ENCODE measurements at regions of chr13 and their contacts with region 1.

Region 1: DNA sequence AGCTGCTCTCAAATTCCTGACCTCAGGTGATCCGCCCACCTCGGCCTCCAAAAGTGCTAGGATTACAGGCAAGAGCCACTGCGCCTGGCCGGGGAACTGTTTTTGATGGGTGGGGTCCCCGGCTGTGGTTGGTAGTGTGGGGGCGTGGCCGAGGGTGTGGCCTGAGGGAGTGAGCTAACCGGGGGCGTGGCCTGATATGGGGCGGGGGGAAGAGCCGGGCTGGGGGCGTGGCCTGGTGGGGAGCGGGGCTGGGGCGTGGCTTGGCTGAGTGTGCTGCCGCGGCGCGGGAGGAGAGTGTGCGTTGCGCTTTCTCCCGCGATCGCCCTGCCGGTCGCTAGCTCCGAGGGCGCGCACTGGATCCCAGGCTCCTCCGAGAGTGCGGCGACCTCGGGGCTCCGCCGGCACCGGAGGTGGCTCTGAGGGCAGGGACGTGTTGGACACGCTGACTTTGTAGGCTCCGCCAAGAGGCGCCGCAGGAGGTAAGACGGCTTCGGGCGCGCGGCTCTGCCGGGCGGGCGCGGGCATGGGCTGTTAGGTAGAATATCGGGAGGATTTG is at the start of gene SPATA13:
- DNase-seq: peak; percentile 81 to 92
- H3K4me3 ChIP-seq: peak within 1 kb of the TSS; percentile 75
- H3K27ac ChIP-seq: peak within 1 kb of the TSS; percentile 86
- H3K4me1 ChIP-seq: peaks cover 26% of the 10 kb centered on the region
- H3K27me3 ChIP-seq: no peaks in the 10 kb centered on the region
- CTCF ChIP-seq: no peak
- total RNA-seq, gene SPATA13: 28.7 and 33.0 TPM in 2 replicates

Region 2: DNA sequence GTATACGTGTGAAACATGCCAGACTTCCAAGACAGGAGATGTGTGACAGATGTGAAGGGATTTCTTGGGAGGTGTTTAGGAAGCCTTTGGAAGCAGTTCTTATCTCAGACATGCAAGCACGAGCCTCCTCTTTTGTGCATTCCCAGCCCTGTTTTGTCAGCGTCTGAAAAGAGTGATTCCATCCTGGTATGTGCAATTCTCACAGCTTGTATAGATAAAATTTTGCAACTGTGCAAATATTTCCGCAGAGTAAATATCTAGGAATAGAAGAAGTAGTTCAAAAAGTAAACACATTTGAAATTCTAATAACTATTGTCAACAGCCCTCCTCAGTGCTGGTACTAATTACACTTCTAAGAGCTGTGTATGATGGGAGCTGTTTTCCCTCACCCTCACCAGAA is 190.9 kb before region 1 on chr13:
- CTCF ChIA-PET with region 1: no interaction called
- POLR2A ChIA-PET with region 1: no interaction called
- intact Hi-C with region 1: no loop called
- DNase-seq: no peak
- H3K4me3 ChIP-seq: no peak overlapping the region
- H3K27ac ChIP-seq: no peak overlapping the region
- H3K4me1 ChIP-seq: no peaks in the 10 kb centered on the region
- H3K27me3 ChIP-seq: no peaks in the 10 kb centered on the region
- CTCF ChIP-seq: no peak

Region 3: GRCh38 chr13:24038841-24039330 is 121.6 kb before region 1 on chr13:
- CTCF ChIA-PET with region 1: no interaction called
- POLR2A ChIA-PET with region 1: no interaction called
- intact Hi-C with region 1: loop called (anchors 5 kb)
- DNase-seq: peak; percentile 59 to 76
- H3K4me3 ChIP-seq: peak overlapping the region; percentile 36; the same call in 1 of the 2 replicates
- H3K27ac ChIP-seq: peak overlapping the region; percentile 52
- H3K4me1 ChIP-seq: peaks cover 26% of the 10 kb centered on the region
- H3K27me3 ChIP-seq: no peaks in the 10 kb centered on the region
- CTCF ChIP-seq: no peak

Region 4: GRCh38 chr13:24053519-24054251 is 106.8 kb before region 1 on chr13:
- CTCF ChIA-PET with region 1: no interaction called
- POLR2A ChIA-PET with region 1: no interaction called
- intact Hi-C with region 1: loop called (anchors 1 kb)
- DNase-seq: peak; percentile 55 to 78
- H3K4me3 ChIP-seq: no peak overlapping the region
- H3K27ac ChIP-seq: no peak overlapping the region
- H3K4me1 ChIP-seq: peaks cover 14% of the 10 kb centered on the region
- H3K27me3 ChIP-seq: no peaks in the 10 kb centered on the region
- CTCF ChIP-seq: peak; percentile 89

Region 5: GRCh38 chr13:24083722-24084421 is 76.7 kb before region 1 on chr13:
- CTCF ChIA-PET with region 1: no interaction called
- POLR2A ChIA-PET with region 1: interaction called, 24 read pairs
- intact Hi-C with region 1: no loop called
- DNase-seq: no peak
- H3K4me3 ChIP-seq: no peak overlapping the region
- H3K27ac ChIP-seq: no peak overlapping the region
- H3K4me1 ChIP-seq: peaks cover 7% of the 10 kb centered on the region; the same call in 1 of the 2 replicates
- H3K27me3 ChIP-seq: no peaks in the 10 kb centered on the region
- CTCF ChIP-seq: no peak

Region 6: DNA sequence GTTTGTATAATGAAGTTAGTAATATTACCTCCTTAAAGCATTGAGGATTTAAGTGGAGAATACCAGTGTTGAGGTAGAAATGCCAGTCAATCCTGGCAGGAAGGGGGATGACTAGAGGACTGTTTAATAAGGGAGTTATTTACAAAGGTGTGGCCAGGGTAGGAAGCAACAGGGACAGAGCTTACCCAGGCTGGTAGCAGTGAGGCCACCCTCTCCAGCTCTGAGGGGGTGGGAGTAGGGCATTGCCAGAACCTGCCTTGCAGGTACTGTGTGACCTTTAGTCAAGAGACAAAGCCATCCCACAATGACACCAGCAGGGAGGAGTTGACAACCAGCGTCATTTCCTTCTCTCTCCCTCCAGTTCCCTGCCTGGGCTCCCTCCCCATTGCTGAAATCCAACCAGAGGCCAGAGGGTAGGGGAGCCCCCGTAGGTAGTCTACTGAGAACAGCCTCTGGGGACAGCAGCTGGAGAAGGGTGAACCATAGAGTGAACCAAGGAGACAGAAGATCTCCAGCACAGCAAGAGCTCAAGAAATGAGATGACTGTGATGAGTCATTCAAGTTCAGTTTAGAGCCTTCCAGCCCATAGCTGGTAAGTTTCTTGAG is 33.4 kb before region 1 on chr13:
- CTCF ChIA-PET with region 1: interaction called, 3 read pairs
- POLR2A ChIA-PET with region 1: interaction called, 8 read pairs
- intact Hi-C with region 1: loop called (anchors 1 kb)
- DNase-seq: peak; percentile 67 to 91
- H3K4me3 ChIP-seq: peak overlapping the region; percentile 18; the same call in 1 of the 2 replicates
- H3K27ac ChIP-seq: peak overlapping the region; percentile 87
- H3K4me1 ChIP-seq: peaks cover 50% of the 10 kb centered on the region
- H3K27me3 ChIP-seq: no peaks in the 10 kb centered on the region
- CTCF ChIP-seq: no peak

Region 7: DNA sequence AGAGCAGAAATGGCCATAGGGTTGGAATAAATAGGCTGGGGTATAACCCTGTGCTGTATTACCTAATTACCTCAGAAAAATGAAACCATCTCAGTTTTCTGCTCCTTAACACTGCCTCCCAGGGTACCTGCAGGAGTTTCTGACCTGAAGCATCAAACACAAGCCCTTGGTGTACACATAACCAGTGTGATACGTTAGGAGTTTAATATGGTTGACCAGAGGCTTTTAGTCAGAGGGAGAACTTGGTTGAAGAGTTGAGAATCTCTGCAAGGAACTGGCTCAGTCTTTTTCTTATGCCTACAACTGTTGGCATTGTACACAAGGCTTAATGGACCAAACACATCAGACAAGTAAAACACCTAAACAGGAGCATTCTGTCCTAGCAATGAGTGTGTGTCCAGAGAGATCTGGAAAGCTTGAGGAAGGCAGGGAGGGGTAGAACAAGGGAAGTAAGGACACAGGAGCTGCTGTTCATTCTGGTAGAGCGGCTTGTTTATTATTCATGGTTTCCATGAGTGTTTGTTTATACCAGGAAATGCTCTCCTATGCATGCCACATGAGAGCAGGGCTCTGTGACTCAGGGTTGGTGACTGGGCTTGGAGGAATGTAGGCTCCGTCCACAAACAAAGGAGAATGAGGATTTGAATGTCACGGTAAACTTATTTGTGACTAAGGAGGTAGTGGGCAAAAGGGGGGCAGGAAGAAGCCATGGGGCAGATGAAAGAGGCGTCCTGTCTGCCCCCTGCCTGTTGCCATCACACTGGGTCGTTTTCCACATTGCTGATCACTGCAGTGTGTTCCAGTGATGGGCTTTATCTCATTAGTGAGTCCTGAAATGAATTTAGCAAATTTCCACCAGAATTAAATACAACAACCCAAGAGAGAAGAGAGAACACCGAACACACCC is 11.9 kb before region 1 on chr13:
- CTCF ChIA-PET with region 1: no interaction called
- POLR2A ChIA-PET with region 1: interaction called, 31 read pairs
- intact Hi-C with region 1: loop called (anchors 1 kb)
- DNase-seq: peak; percentile 81 to 99
- H3K4me3 ChIP-seq: peak overlapping the region; percentile 28; the same call in 1 of the 2 replicates
- H3K27ac ChIP-seq: peak overlapping the region; percentile 92
- H3K4me1 ChIP-seq: peaks cover 61% of the 10 kb centered on the region
- H3K27me3 ChIP-seq: no peaks in the 10 kb centered on the region
- CTCF ChIP-seq: peak; percentile 51; the same call in 1 of the 2 replicates

Region 8: GRCh38 chr13:24220086-24220703 is 59.7 kb after region 1 on chr13:
- CTCF ChIA-PET with region 1: no interaction called
- POLR2A ChIA-PET with region 1: no interaction called
- intact Hi-C with region 1: loop called (anchors 1 kb)
- DNase-seq: peak; percentile 40 to 68
- H3K4me3 ChIP-seq: no peak overlapping the region
- H3K27ac ChIP-seq: peak overlapping the region; percentile 75
- H3K4me1 ChIP-seq: peaks cover 39% of the 10 kb centered on the region
- H3K27me3 ChIP-seq: no peaks in the 10 kb centered on the region
- CTCF ChIP-seq: peak; percentile 86

Region 9: DNA sequence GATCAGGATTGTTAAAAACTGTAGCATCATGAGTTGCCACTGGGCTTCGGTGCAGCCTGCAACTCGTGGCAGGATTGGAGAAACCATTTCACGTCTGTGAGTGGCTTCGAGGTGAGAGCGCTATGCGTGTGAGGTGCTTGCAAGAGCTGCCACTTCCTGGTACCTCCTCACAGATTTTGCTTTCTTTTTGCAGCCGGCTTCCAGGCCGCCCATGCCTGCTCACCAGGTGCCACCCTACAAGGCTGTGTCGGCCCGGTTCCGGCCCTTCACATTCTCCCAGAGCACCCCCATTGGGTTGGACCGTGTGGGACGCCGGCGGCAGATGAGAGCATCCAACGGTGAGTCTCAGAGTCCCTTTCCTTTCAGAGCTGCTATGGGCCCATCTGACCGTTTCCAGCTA is 91.0 kb after region 1 on chr13:
- CTCF ChIA-PET with region 1: no interaction called
- POLR2A ChIA-PET with region 1: no interaction called
- intact Hi-C with region 1: no loop called
- DNase-seq: no peak
- H3K4me3 ChIP-seq: no peak overlapping the region
- H3K27ac ChIP-seq: no peak overlapping the region
- H3K4me1 ChIP-seq: no peaks in the 10 kb centered on the region
- H3K27me3 ChIP-seq: no peaks in the 10 kb centered on the region
- CTCF ChIP-seq: no peak

Region 10: DNA sequence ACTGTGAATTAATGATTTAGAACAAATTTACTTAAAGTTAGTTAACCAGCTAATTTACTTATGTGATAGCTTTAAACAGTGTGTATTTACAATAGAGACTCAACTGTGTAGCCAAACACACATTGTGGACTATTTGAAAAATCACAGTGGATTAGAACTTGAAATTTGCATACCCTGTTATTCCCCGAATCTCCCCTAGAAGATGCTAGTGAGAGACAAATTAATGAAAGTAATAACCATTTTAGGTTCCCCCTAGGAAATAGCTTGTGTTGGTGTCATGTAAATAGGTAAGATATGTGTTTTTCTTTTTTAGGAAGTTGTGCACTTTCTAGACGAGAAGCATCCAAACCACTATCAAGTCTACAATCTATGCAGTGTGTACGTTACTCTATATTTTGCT is 247.3 kb after region 1 on chr13:
- CTCF ChIA-PET with region 1: no interaction called
- POLR2A ChIA-PET with region 1: no interaction called
- intact Hi-C with region 1: no loop called
- DNase-seq: no peak
- H3K4me3 ChIP-seq: no peak overlapping the region
- H3K27ac ChIP-seq: no peak overlapping the region
- H3K4me1 ChIP-seq: no peaks in the 10 kb centered on the region
- H3K27me3 ChIP-seq: no peaks in the 10 kb centered on the region
- CTCF ChIP-seq: no peak; the same call in 1 of the 2 replicates